GM12878 (cell line): ENCODE measurements at regions of chr9 and their contacts with region 1.

Region 1: DNA sequence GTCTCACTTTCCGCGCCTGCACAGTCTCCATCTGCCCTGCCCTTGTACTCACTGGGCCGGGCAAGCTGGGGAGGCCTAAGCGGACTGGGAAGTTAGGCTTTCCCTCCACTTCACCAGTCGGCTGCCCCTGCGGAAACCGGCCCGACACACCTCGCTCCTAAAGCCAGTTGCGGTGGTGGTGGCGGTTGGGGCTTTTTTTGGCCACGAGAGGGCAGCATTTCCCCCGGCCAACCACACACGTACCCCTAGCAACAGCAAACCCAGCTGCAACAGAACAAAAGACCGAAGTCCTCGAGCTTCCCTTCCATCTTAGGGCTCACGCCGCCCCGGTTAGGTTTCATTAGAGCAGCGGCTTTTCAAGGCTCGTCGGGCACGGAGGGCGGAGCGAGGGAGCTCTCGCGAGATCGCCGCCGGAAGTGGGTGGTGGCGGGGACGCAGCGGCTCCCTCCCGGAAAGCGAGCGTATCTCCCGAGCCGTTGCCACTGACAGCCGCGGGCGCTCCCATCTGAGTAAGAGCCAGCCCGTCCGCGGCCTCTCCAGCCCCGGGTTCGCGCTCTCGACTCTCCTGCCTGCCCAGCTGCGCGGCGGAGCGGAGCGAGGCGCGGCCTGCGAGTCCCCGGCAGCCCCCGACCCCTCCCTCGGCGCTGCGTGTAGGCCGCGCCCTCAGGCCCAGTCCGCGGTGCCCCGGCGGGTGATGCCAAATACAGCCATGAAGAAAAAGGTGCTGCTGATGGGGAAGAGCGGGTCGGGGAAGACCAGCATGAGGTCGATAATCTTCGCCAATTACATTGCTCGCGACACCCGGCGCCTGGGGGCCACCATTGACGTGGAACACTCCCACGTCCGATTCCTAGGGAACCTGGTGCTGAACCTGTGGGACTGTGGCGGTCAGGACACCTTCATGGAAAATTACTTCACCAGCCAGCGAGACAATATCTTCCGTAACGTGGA is at the start of gene RRAGA:
- DNase-seq: peak; percentile 90
- ATAC-seq: peak; percentile 93
- H3K4me3 ChIP-seq: peak within 1 kb of the TSS; percentile 88
- H3K27ac ChIP-seq: peak within 1 kb of the TSS; percentile 82
- H3K4me1 ChIP-seq: peaks cover 5% of the 10 kb centered on the region
- H3K27me3 ChIP-seq: no peaks in the 10 kb centered on the region
- CTCF ChIP-seq: peak; percentile 74 to 89 (median 79)
- EP300 ChIP-seq: peak; percentile 28 to 54; a peak in 1 of 4 replicates
- POLR2A ChIP-seq: peak; percentile 95
- RAD21 ChIP-seq: peak; percentile 36; the same call in 1 of the 2 replicates
- polyA plus RNA-seq, gene RRAGA: 10.1 to 19.3 TPM

Region 2: GRCh38 chr9:18947772-18948391 is 101.4 kb before region 1 on chr9:
- CTCF ChIA-PET with region 1: no interaction called
- POLR2A ChIA-PET with region 1: no interaction called
- RAD21 ChIA-PET with region 1: no interaction called
- SMC1A ChIA-PET with region 1: no interaction called
- in situ Hi-C with region 1: no loop called
- intact Hi-C with region 1: no loop called
- DNase-seq: no peak
- ATAC-seq: peak; percentile 55
- H3K4me3 ChIP-seq: no peak overlapping the region
- H3K27ac ChIP-seq: no peak overlapping the region
- H3K4me1 ChIP-seq: no peaks in the 10 kb centered on the region
- H3K27me3 ChIP-seq: no peaks in the 10 kb centered on the region; a peak in 1 of 4 replicates
- CTCF ChIP-seq: no peak
- EP300 ChIP-seq: no peak
- POLR2A ChIP-seq: no peak
- RAD21 ChIP-seq: no peak

Region 3: GRCh38 chr9:19085295-19085694 is 36.1 kb after region 1 on chr9:
- CTCF ChIA-PET with region 1: interaction called, 20 read pairs
- POLR2A ChIA-PET with region 1: interaction called, 6 read pairs
- RAD21 ChIA-PET with region 1: interaction called, 5 read pairs
- SMC1A ChIA-PET with region 1: interaction called, 7 read pairs
- in situ Hi-C with region 1: no loop called
- intact Hi-C with region 1: no loop called
- DNase-seq: no peak
- ATAC-seq: peak; percentile 88
- H3K4me3 ChIP-seq: no peak overlapping the region
- H3K27ac ChIP-seq: no peak overlapping the region
- H3K4me1 ChIP-seq: no peaks in the 10 kb centered on the region
- H3K27me3 ChIP-seq: no peaks in the 10 kb centered on the region
- CTCF ChIP-seq: peak; percentile 33 to 47 (median 35); a peak in 3 of 6 replicates
- EP300 ChIP-seq: no peak
- POLR2A ChIP-seq: no peak
- RAD21 ChIP-seq: peak; percentile 47

Region 4: DNA sequence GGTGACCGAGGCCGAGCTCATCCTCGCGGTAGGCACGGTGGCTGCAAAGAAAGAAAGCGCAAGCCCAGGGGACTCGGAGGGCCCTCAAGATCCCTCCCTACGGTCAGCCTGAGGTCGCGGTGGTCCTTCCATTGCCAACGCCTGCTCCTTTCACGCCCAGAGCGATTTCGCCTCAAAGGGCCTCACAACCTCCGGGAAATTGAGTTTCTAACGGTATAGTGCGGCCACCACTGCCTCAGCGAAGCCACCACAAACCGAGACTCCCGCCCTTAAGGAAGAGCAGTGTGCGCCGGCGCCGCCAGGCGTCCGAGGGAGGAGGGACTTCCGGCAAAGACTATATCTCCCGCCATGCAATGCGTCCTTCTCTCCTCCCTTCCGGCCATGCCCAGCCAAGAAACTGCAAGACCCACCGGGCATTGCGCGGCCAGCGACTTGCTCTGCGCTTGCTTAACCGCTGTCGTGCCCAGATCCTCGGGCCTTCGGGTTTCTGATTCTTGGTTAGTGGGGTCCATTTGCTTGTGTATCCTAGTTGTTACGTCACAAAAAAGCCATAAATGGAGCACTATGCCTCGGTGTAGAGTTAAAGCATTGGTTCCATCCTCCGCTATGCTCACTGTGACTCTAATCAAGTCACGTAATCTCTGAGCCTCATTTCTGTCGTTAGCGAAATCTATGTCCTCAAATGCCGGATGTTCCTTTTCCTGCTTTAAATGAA is 53.5 kb after region 1 on chr9 and contains the start of gene HAUS6:
- CTCF ChIA-PET with region 1: no interaction called
- POLR2A ChIA-PET with region 1: interaction called, 8 read pairs
- RAD21 ChIA-PET with region 1: no interaction called
- SMC1A ChIA-PET with region 1: no interaction called
- in situ Hi-C with region 1: no loop called
- intact Hi-C with region 1: loop called (anchors 1 kb)
- DNase-seq: peak; percentile 89
- ATAC-seq: peak; percentile 98
- H3K4me3 ChIP-seq: peak within 1 kb of the TSS; percentile 80
- H3K27ac ChIP-seq: peak within 1 kb of the TSS; percentile 72
- H3K4me1 ChIP-seq: peaks cover 9% of the 10 kb centered on the region; the same call in 1 of the 2 replicates
- H3K27me3 ChIP-seq: no peaks in the 10 kb centered on the region
- CTCF ChIP-seq: peak in 2 of 3 experiments; percentile 10 to 44; a peak in 1 of 6 replicates
- EP300 ChIP-seq: no peak
- POLR2A ChIP-seq: peak; percentile 80
- RAD21 ChIP-seq: no peak
- polyA plus RNA-seq, gene HAUS6: 7.1 to 8.4 TPM

Region 5: GRCh38 chr9:19127881-19128500 is 78.8 kb after region 1 on chr9:
- CTCF ChIA-PET with region 1: interaction called, 6 read pairs
- POLR2A ChIA-PET with region 1: interaction called, 5 read pairs
- RAD21 ChIA-PET with region 1: interaction called, 13 read pairs
- SMC1A ChIA-PET with region 1: interaction called, 5 read pairs
- in situ Hi-C with region 1: no loop called
- intact Hi-C with region 1: loop called (anchors 2 kb)
- DNase-seq: no peak
- ATAC-seq: peak; percentile 35
- H3K4me3 ChIP-seq: peak overlapping the region; percentile 77
- H3K27ac ChIP-seq: peak overlapping the region; percentile 85
- H3K4me1 ChIP-seq: peaks cover 23% of the 10 kb centered on the region
- H3K27me3 ChIP-seq: no peaks in the 10 kb centered on the region
- CTCF ChIP-seq: no peak
- EP300 ChIP-seq: no peak
- POLR2A ChIP-seq: no peak; the same call in 1 of the 2 replicates
- RAD21 ChIP-seq: no peak

Region 6: DNA sequence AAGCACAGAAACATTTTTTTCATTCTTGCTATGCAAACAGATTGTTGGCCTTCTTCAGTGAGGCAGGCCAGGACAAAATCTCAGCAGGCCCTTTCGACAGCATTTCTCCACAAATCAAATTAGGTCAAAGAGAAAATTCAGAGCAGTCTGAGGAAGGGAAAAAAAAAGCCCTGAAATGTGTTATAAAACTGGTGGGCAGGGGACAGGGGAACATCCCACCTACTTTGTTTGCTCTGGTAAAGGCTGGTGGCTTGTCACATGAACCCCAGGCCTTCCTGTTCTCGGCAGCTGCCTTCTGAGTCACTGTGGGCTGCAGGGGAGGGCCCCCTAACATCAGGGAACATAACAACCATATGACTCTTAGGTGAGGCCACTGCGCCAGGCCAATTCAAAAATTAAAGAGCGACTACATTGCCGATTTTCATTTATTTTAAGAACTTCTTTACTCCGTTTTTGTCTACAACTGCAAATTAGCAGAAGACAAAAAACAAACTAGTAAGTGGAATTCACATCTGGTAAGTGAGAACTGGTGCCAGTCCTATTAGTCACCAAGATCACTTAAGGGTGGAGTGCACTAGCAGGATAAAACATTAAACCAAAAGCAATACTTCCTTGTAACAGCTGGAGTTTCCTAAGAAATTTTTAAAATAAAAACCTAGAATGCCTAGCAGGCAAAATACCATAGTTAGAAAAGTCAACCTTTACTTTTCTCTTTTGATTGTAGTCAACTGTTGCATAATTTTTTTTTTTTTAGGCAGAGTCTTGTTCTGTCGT is 135.1 kb after region 1 on chr9:
- CTCF ChIA-PET with region 1: interaction called, 12 read pairs
- POLR2A ChIA-PET with region 1: no interaction called
- RAD21 ChIA-PET with region 1: interaction called, 9 read pairs
- SMC1A ChIA-PET with region 1: interaction called, 3 read pairs
- in situ Hi-C with region 1: no loop called
- intact Hi-C with region 1: no loop called
- DNase-seq: peak; percentile 46
- ATAC-seq: peak; percentile 99
- H3K4me3 ChIP-seq: no peak overlapping the region
- H3K27ac ChIP-seq: peak overlapping the region; percentile 59; the same call in 1 of the 2 replicates
- H3K4me1 ChIP-seq: 0 out of 2 replicates have a peak, but pooled peaks cover 5% of the 10 kb centered on the region
- H3K27me3 ChIP-seq: no peaks in the 10 kb centered on the region
- CTCF ChIP-seq: 0 out of 6 replicates have a peak, but pooled peaks of 1 of the 3 experiments have one; percentile 0
- EP300 ChIP-seq: peak; percentile 72 to 84; a peak in 3 of 4 replicates
- POLR2A ChIP-seq: peak; percentile 37; the same call in 1 of the 2 replicates
- RAD21 ChIP-seq: peak; percentile 19; the same call in 1 of the 2 replicates

Region 7: GRCh38 chr9:19379697-19380046 is 330.4 kb after region 1 on chr9:
- CTCF ChIA-PET with region 1: no interaction called
- POLR2A ChIA-PET with region 1: interaction called, 4 read pairs
- RAD21 ChIA-PET with region 1: interaction called, 3 read pairs
- SMC1A ChIA-PET with region 1: no interaction called
- in situ Hi-C with region 1: no loop called
- intact Hi-C with region 1: loop called (anchors 5 kb)
- DNase-seq: no peak
- ATAC-seq: peak; percentile 45
- H3K4me3 ChIP-seq: peak overlapping the region; percentile 82
- H3K27ac ChIP-seq: peak overlapping the region; percentile 88
- H3K4me1 ChIP-seq: peaks cover 5% of the 10 kb centered on the region
- H3K27me3 ChIP-seq: no peaks in the 10 kb centered on the region
- CTCF ChIP-seq: no peak
- EP300 ChIP-seq: no peak
- POLR2A ChIP-seq: no peak
- RAD21 ChIP-seq: no peak

Region 8: DNA sequence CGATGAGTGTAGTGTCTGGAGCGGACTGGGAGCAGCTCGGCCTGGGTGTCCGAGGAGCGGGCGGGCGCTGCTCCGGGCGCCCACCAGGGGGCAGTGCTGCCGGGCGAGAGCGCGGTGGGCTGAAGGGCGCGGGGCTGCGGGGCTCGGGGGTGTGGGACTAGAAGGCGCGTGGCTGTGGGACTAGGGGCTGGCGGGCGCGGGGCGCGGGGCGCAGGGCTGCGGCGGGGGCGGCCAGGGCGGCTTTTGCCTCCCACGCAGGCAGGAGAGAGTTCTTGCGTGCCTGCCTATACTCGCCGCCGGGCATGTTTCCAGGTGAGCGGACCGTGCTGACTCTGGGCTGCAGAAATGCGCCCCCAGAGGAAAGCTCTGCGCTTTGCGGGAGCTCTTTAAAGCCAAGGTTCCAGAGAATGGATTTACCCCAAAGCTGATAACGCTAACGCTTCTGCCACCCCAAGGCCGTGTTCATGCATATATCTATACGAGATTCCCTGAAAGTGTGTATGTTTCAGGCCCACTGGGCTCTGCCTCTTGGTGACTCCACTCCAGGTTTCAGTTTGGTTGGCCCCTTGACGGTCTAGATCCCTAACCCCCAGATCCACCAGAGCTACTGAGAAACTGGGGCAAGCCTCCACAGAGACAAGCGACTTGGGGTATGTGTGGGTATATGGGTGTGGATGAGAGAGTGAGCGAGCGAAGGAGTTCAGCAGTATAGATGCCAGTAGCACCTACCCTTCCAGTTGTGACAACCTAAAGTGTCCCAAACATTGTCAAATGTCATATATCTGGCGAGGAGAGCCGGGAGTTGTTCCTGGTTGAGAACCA is 415.7 kb after region 1 on chr9:
- CTCF ChIA-PET with region 1: interaction called, 13 read pairs
- POLR2A ChIA-PET with region 1: no interaction called
- RAD21 ChIA-PET with region 1: no interaction called
- SMC1A ChIA-PET with region 1: interaction called, 3 read pairs
- in situ Hi-C with region 1: no loop called
- intact Hi-C with region 1: no loop called
- DNase-seq: no peak
- ATAC-seq: peak; percentile 97
- H3K4me3 ChIP-seq: peak overlapping the region; percentile 69; the same call in 1 of the 2 replicates
- H3K27ac ChIP-seq: no peak overlapping the region
- H3K4me1 ChIP-seq: 0 out of 2 replicates have a peak, but pooled peaks cover 3% of the 10 kb centered on the region
- H3K27me3 ChIP-seq: no peaks in the 10 kb centered on the region
- CTCF ChIP-seq: peak; percentile 67 to 73 (median 69)
- EP300 ChIP-seq: no peak
- POLR2A ChIP-seq: no peak
- RAD21 ChIP-seq: 0 out of 2 replicates have a peak, but pooled peaks have one; percentile 16